ENCODE measurements at regions of chr2 and their contacts with region 1.

Region 1: DNA sequence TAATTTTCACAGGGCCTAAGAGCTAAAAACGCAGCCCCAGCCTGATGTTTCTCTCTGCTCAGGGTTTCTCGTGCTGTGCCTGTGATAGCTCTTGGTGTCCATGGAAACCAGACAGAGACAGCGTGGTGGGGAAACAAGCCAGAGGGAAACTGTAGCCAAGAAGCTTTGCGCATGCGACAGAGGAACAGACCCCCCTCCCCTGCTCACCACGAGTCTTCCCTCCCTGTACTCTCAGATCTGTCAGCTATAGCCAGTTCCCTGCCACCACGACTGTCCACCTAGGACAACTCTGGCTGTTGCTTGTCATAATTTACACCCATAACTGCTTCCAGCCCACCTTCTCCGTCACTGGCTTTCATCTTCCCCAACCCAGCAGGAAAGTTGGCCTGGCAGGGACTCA is 13.2 kb upstream of the DNAJC27 start:
- DNase-seq: peak; percentile 43 to 81 (median 75)
- H3K4me3 ChIP-seq: peak overlapping the region in 11 of 59 donors; percentile 8 to 46 (median 22)
- H3K27ac ChIP-seq: peak overlapping the region in 53 of 59 donors; percentile 1 to 87 (median 66)
- H3K27me3 ChIP-seq: no peaks in the 10 kb centered on the region
- CTCF ChIP-seq: no peak

Region 2: GRCh38 chr2:25035544-25036220 is 50.8 kb after region 1 on chr2:
- intact Hi-C with region 1: loop called (anchors 5 kb)
- DNase-seq: no peak
- H3K4me3 ChIP-seq: no peak overlapping the region
- H3K27ac ChIP-seq: peak overlapping the region in 17 of 59 donors; percentile 4 to 63 (median 31)
- H3K27me3 ChIP-seq: no peaks in the 10 kb centered on the region
- CTCF ChIP-seq: no peak

Measured in dorsolateral prefrontal cortex (tissue), 120 donors.